Activated CD4-positive, alpha-beta memory T cell treated with anti-CD3 and anti-CD28 coated beads for 36 hours (primary cell): ENCODE measurements at regions of chr5 and their contacts with region 1.

Region 1: DNA sequence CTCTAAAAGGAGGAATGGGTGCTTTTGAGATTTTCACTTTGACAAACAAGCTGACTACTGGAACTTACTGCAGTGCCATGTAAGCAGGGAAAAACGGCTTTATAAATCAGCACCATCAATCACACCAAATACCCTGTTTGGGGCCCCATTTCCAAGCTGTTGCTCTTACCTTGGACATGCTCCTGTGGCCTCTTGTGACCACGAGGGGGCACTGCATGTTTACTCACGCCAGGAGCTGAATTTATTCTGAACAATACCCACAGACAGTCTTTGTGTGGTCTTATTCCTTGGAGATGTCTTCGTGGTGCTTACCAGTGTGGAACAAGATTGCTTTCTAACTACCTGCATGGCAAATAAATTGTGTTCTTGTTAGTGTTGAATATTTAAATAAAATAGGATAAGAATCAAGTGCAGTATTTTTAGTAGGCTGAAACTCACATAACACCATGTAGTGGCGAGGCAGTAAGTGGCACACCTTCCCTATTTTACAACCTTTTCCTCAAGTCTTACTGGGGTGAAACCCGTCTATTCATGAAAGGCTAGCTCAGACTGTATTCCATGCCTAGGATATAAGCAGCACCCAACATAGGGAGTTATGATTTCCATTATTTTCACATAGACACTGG is 155.5 kb upstream of the NMUR2 start:
- DNase-seq: peak; percentile 60
- H3K4me3 Mint-ChIP-seq: no peak overlapping the region
- H3K27ac Mint-ChIP-seq: no peak overlapping the region
- H3K4me1 Mint-ChIP-seq: no peaks in the 10 kb centered on the region
- H3K27me3 Mint-ChIP-seq: no peaks in the 10 kb centered on the region

Region 2: DNA sequence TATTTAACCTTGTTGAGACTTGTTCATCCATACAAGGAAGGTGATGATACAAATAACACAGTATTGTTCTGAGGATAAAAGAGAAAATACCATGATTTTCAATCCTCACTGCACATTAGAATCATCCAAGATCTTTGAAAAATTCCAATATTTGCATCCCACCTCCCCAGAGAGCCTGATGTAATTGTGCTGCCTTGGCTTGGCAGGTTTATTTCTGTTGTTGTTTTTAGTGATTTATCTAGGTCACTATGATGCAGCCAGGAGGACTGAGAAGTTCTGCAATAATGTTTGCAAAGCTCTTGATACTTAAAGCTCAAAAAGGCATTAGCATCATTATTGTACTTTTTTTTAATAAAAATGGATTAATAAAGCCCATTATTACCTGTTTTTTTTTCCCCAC is 88.5 kb before region 1 on chr5:
- CTCF ChIA-PET with region 1: no interaction called
- POLR2A ChIA-PET with region 1: no interaction called
- intact Hi-C with region 1: no loop called
- DNase-seq: no peak
- H3K4me3 Mint-ChIP-seq: no peak overlapping the region
- H3K27ac Mint-ChIP-seq: no peak overlapping the region
- H3K4me1 Mint-ChIP-seq: no peaks in the 10 kb centered on the region
- H3K27me3 Mint-ChIP-seq: peaks cover 5% of the 10 kb centered on the region

Region 3: GRCh38 chr5:153122403-153122802 is 561.8 kb after region 1 on chr5:
- CTCF ChIA-PET with region 1: no interaction called
- POLR2A ChIA-PET with region 1: no interaction called
- intact Hi-C with region 1: loop called (anchors 10 kb)
- DNase-seq: no peak
- H3K4me3 Mint-ChIP-seq: no peak overlapping the region
- H3K27ac Mint-ChIP-seq: no peak overlapping the region
- H3K4me1 Mint-ChIP-seq: no peaks in the 10 kb centered on the region
- H3K27me3 Mint-ChIP-seq: no peaks in the 10 kb centered on the region